ENCODE measurements at regions of chr9 and their contacts with region 1.

Region 1: DNA sequence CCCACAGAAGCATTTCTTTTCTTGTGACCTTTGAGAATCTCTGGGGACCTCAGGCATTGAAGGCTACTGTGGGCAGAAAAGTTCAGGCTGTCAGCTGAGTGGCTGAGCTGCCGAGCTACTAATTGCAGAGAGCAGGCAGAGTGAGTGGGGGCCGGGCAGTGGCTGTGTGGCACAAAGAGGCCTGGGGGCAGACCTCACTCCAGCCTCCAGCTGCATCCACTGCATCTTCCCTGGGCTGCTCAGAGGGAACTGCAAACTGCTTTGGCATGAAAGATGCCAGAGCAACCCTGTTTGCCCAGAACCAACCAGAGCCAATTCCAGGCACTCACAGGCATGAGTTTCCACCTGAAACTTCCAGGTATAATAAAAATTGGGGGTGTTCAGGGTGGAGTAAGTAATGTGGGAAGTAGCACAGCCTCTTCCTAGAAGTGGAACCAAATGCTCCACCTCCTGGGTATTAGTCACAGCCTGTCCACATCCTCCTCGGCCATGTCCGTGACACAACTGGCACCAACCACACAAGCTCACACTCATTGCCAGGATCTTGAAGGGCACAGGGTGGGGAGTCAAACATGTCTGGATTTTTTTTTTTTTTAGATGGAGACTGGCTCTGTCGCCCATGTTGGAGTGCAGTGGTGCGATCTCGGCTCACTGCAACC is 548.9 kb downstream of the BNC2 start:
- DNase-seq: no peak

Region 2: GRCh38 chr9:16289639-16290038 is 32.0 kb before region 1 on chr9:
- intact Hi-C with region 1: loop called in 1 of 2 experiments (anchors 1 kb)
- DNase-seq: no peak